ENCODE measurements at regions of chrX and their contacts with region 1.

Region 1: DNA sequence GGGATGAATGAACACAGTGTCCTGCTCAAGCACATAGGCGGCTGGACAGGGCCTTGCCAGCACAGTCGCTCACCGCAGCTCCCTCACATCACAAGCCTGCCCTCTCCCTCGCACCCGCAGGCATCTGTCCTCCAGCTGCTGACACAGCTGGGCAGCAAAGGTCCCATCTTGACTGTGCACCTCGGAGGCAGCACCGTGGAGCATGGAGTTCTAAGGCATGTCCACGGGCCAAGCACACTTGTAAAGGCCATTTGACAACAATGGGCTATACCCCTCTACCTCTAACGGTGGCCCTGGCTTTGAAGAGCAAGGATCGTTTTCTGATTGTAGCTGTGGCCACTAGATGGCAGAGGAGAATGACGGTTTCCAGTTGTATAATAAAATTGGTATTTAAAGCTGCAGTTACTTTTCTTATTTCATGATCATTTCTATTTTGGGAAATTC is 53.8 kb downstream of the APLN start:
- DNase-seq: peak in 1 of 2 donors; percentile 85
- H3K4me3 ChIP-seq: no peak overlapping the region
- H3K27ac ChIP-seq: no peak overlapping the region
- H3K4me1 ChIP-seq: peaks cover 10% of the 10 kb centered on the region
- H3K27me3 ChIP-seq: no peaks in the 10 kb centered on the region
- CTCF ChIP-seq: peak in 2 of 3 experiments; percentile 14 to 41
- POLR2A ChIP-seq: no peak

Region 2: DNA sequence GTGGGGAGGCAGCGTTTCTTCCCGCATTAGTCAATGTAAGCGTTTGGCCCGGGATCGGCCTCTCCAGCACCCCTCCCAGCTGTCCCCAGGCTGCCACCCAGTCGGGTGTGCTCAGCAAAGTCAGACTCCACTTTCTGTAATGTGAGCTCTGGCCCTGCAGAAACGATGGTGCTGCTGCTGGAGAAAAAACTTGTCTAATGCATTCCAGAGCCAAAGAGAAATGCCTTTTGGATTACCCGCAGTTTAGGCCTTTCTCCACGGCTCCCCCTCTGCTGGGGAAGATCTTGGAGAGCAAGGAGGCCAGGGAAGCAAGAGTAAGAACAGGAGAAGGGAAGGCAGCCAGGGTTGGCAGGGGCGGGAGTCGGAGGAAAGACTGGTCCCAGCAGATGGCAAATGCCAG is 454.1 kb after region 1 on chrX:
- intact Hi-C with region 1: loop called (anchors 5 kb)
- DNase-seq: no peak
- H3K4me3 ChIP-seq: no peak overlapping the region
- H3K27ac ChIP-seq: peak overlapping the region; percentile 36
- H3K4me1 ChIP-seq: peaks cover 10% of the 10 kb centered on the region
- H3K27me3 ChIP-seq: no peaks in the 10 kb centered on the region
- CTCF ChIP-seq: no peak
- POLR2A ChIP-seq: no peak

Measured in vagina (tissue), 2 donors.